Activated naive CD8-positive, alpha-beta T cell treated with anti-CD3 and anti-CD28 coated beads, Interleukin-2, amount 10 ng/mL, durations not matched to agents 7 days and 5 days (primary cell): ENCODE measurements at regions of chr22 and their contacts with region 1.

Region 1: GRCh38 chr22:39319270-39320022 is at the start of gene RPL3:
- DNase-seq: peak; percentile 99
- ATAC-seq: peak; percentile 86
- H3K4me3 Mint-ChIP-seq: peak within 1 kb of the TSS; percentile 100
- H3K27ac Mint-ChIP-seq: peak within 1 kb of the TSS; percentile 99
- H3K4me1 Mint-ChIP-seq: peaks cover 44% of the 10 kb centered on the region
- H3K27me3 Mint-ChIP-seq: no peaks in the 10 kb centered on the region
- total RNA-seq, gene RPL3: 1,927 to 2,015 TPM

Region 2: DNA sequence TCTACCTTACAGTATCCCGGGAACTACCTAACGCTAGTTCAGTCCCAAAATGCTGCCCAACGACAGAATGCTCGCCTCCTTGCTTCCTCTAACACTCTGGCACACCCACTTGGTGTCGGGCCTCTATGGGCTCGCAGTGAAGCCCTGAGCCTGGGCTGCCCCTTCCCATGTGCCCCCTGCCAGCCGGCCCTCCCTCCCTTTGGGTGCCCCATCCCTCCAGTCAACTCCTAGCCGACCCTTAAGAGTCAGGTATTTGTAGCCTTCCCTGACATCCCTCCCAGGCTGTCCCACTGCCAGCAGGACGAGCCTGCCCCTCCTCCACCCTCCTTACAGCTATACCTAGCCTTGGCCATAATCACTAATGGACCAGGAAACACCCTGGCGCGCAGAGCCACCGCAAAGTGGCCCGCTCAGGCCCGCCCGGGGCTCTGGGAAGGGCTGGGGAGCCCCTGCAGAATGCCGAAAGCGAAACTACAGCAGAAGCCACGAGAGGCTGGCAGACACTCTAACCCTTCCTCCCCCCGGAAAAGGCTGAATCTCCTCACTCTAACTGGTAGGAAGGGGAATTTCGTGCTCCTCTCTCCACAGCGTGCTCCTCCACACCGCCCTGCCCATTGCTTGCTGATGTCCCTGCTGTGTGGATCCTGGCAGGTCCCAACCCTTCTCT is 175.2 kb before region 1 on chr22:
- POLR2A ChIA-PET with region 1: interaction called, 19 read pairs
- DNase-seq: peak; percentile 69
- ATAC-seq: peak; percentile 70
- H3K4me3 Mint-ChIP-seq: peak overlapping the region; percentile 99
- H3K27ac Mint-ChIP-seq: peak overlapping the region; percentile 97
- H3K4me1 Mint-ChIP-seq: peaks cover 14% of the 10 kb centered on the region
- H3K27me3 Mint-ChIP-seq: no peaks in the 10 kb centered on the region

Region 3: DNA sequence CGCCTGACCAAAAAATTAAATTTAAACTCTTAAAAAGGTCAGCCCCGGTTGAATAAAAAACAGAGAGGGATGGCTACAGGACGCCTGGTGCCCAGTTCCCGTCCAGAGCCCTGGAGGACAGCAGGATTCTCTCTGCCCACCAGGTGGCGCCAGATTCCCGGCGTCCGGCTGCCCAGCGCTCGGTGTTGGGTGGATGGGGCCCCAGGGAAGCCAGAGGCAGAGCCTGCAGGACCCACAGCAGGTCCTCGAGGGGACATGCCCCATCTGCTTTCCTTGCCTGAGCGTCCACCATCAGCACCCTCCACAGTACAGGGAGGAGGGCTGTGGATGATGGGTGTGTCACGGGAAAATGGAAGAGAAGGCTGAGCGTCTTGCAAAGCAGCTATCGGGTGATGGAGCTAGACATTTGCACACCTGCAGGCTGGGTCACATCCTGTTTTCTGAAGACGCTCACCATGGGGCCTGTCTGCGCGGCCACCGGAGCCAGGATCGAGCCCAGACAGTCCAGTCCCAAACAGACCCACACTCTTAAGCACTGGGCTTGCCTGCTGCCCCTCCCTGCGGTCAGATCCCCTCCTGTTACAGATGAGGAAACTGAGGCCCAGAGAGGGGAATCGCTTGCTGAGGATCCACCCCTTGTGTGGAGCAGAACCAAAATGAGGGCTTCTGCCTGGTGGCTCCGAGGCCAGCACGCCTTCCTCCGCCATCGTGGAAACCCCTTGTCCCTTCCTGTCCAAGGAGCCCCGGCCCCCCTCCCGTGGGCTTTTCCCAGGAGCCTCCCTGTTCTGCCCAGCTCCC is 148.4 kb before region 1 on chr22:
- POLR2A ChIA-PET with region 1: interaction called, 46 read pairs
- DNase-seq: peak; percentile 93
- ATAC-seq: peak; percentile 82
- H3K4me3 Mint-ChIP-seq: peak overlapping the region; percentile 76
- H3K27ac Mint-ChIP-seq: peak overlapping the region; percentile 85
- H3K4me1 Mint-ChIP-seq: peaks cover 27% of the 10 kb centered on the region
- H3K27me3 Mint-ChIP-seq: peaks cover 12% of the 10 kb centered on the region

Region 4: GRCh38 chr22:39332441-39333064 is 13.1 kb after region 1 on chr22:
- POLR2A ChIA-PET with region 1: interaction called, 25 read pairs
- DNase-seq: no peak
- ATAC-seq: no peak
- H3K4me3 Mint-ChIP-seq: no peak overlapping the region
- H3K27ac Mint-ChIP-seq: no peak overlapping the region
- H3K4me1 Mint-ChIP-seq: peaks cover 6% of the 10 kb centered on the region
- H3K27me3 Mint-ChIP-seq: peaks cover 4% of the 10 kb centered on the region

Region 5: GRCh38 chr22:39349506-39349966 is 30.1 kb after region 1 on chr22:
- POLR2A ChIA-PET with region 1: interaction called, 39 read pairs
- DNase-seq: peak; percentile 76
- ATAC-seq: peak; percentile 28
- H3K4me3 Mint-ChIP-seq: peak overlapping the region; percentile 82
- H3K27ac Mint-ChIP-seq: peak overlapping the region; percentile 91
- H3K4me1 Mint-ChIP-seq: peaks cover 30% of the 10 kb centered on the region
- H3K27me3 Mint-ChIP-seq: peaks cover 2% of the 10 kb centered on the region

Region 6: GRCh38 chr22:39374191-39374590 is 54.7 kb after region 1 on chr22:
- POLR2A ChIA-PET with region 1: no interaction called
- DNase-seq: no peak
- ATAC-seq: no peak
- H3K4me3 Mint-ChIP-seq: no peak overlapping the region
- H3K27ac Mint-ChIP-seq: no peak overlapping the region
- H3K4me1 Mint-ChIP-seq: no peaks in the 10 kb centered on the region
- H3K27me3 Mint-ChIP-seq: no peaks in the 10 kb centered on the region

Region 7: DNA sequence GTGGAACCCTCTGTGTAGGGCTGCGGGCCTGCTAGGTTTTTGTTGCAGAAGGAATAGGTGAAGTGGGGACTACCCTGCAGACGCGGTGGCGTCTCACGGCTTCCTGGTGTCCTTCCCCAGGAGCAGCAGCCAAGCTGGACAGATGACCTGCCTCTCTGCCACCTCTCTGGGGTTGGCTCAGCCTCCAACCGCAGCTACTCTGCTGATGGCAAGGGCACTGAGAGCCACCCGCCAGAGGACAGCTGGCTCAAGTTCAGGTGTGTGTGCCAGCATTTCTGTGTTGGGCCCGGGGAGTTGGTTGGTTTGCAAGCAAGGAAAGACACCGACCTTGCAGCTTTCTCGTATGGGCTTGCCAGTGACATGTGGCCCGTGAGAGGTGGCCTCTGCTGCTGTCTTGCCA is 95.4 kb after region 1 on chr22:
- POLR2A ChIA-PET with region 1: interaction called, 13 read pairs
- DNase-seq: no peak
- ATAC-seq: no peak
- H3K4me3 Mint-ChIP-seq: no peak overlapping the region
- H3K27ac Mint-ChIP-seq: no peak overlapping the region
- H3K4me1 Mint-ChIP-seq: peaks cover 41% of the 10 kb centered on the region
- H3K27me3 Mint-ChIP-seq: no peaks in the 10 kb centered on the region

Region 8: DNA sequence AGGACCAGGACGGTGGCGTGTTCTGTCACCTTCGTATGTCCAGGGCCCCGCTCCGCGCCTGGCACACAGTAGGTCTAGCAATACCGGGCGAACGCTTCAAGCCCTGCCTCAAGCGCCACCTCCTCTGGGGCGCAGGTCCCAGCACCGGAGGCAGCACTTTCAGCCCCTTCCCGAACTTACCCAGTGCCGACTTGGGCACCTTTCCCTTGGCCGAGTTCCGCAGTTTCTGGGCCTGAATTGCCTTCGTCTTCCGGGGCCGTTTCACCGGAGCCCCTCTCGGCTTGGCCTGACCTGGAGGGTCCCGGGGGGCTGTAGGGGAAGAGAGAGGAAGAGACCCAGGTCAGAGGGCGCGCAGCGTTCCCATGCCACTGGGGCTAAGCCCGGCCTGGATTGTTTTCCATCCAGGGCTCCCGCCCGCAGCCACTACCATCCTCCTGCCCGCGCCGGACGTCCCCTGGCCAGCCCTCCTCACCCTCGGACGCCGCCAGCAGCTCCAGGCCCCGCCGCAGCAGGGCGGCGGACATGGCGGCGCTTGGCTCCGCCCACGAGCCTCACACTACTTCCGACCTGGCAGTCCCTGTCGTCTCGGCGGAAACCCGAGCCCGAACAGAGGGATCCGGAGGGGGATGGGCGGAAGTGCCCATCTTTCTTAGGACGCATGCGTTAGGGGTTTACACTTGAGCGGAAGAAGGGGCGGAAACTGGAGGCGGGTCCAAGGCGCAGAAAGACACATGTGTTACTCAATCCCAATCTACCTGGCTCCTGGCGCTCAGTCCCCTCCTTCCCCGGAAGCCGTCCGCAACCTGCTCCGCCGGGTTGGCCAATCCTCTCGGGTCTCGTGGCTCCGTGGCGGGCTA is 213.0 kb after region 1 on chr22 and contains the start of gene RPS19BP1:
- POLR2A ChIA-PET with region 1: interaction called, 80 read pairs
- DNase-seq: peak; percentile 97
- ATAC-seq: peak; percentile 85
- H3K4me3 Mint-ChIP-seq: peak within 1 kb of the TSS; percentile 93
- H3K27ac Mint-ChIP-seq: peak within 1 kb of the TSS; percentile 97
- H3K4me1 Mint-ChIP-seq: peaks cover 43% of the 10 kb centered on the region
- H3K27me3 Mint-ChIP-seq: no peaks in the 10 kb centered on the region
- total RNA-seq, gene RPS19BP1: 66.5 to 71.4 TPM